ENCODE measurements at regions of chr10 and their contacts with region 1.

Region 1: GRCh38 chr10:97210543-97210961 is 24.8 kb upstream of the SLIT1 start:
- DNase-seq: peak; percentile 91
- ATAC-seq: peak; percentile 93
- H3K4me3 Mint-ChIP-seq: no peak overlapping the region
- H3K27ac Mint-ChIP-seq: no peak overlapping the region
- H3K4me1 Mint-ChIP-seq: no peaks in the 10 kb centered on the region
- H3K27me3 Mint-ChIP-seq: no peaks in the 10 kb centered on the region
- CTCF ChIP-seq: peak; percentile 98

Region 2: GRCh38 chr10:97042746-97043565 is 167.6 kb before region 1 on chr10:
- CTCF ChIA-PET with region 1: interaction called, 26 read pairs
- POLR2A ChIA-PET with region 1: no interaction called
- DNase-seq: no peak
- ATAC-seq: no peak
- H3K4me3 Mint-ChIP-seq: no peak overlapping the region
- H3K27ac Mint-ChIP-seq: no peak overlapping the region; the same call in 1 of the 2 replicates
- H3K4me1 Mint-ChIP-seq: peaks cover 12% of the 10 kb centered on the region
- H3K27me3 Mint-ChIP-seq: peaks cover 1% of the 10 kb centered on the region
- CTCF ChIP-seq: no peak

Region 3: GRCh38 chr10:97170326-97170725 is 40.2 kb before region 1 on chr10:
- CTCF ChIA-PET with region 1: interaction called, 10 read pairs
- POLR2A ChIA-PET with region 1: no interaction called
- DNase-seq: no peak
- ATAC-seq: peak; percentile 58
- H3K4me3 Mint-ChIP-seq: no peak overlapping the region
- H3K27ac Mint-ChIP-seq: no peak overlapping the region
- H3K4me1 Mint-ChIP-seq: peaks cover 10% of the 10 kb centered on the region; the same call in 1 of the 2 replicates
- H3K27me3 Mint-ChIP-seq: no peaks in the 10 kb centered on the region
- CTCF ChIP-seq: no peak

Region 4: DNA sequence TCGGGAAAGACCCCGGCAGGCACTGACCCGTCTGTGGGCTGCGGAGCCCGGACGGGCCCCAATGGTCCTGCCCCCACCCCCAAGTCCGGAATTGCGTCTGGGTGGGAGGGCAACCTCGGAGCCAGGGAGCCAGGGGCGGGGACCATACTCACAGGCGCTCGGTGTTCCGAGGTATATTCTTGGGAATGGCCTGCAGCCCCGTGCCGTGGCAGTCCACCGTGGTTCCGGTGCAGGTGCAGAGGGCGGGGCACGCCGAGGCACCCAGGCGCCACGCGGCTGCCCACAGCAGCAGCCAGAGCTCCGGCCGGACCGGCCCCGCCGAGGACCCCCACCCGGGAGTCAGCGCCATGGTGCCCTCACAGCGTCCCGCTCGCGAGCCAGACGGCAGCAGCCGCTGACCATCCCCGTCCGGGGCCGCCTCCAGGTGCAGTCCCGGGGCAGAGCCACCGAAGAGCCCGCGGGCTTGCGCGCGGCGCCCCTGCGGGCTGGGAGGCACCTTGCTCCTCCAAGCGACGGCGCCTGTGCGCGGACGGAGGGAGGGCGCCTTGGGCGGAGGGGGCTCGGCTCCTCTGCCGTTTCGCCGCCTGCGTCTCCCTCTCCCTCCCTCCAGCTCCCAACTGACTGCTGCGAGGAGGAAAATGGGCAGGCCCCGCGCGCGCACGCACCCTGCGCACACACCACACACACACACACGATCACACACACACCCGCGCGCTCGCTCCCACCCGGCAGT is 25.1 kb before region 1 on chr10 and contains the start of gene SLIT1:
- CTCF ChIA-PET with region 1: interaction called, 123 read pairs
- POLR2A ChIA-PET with region 1: no interaction called
- DNase-seq: peak; percentile 61
- ATAC-seq: peak; percentile 71
- H3K4me3 Mint-ChIP-seq: peak within 1 kb of the TSS; percentile 81
- H3K27ac Mint-ChIP-seq: no peak within 1 kb of the TSS
- H3K4me1 Mint-ChIP-seq: peaks cover 20% of the 10 kb centered on the region
- H3K27me3 Mint-ChIP-seq: peaks cover 67% of the 10 kb centered on the region
- CTCF ChIP-seq: no peak
- total RNA-seq, gene SLIT1: 1.1 to 1.6 TPM (median 1.4 TPM) in 3 replicates

Region 5: GRCh38 chr10:97222326-97222961 is 11.9 kb after region 1 on chr10:
- CTCF ChIA-PET with region 1: interaction called, 32 read pairs
- POLR2A ChIA-PET with region 1: no interaction called
- DNase-seq: peak; percentile 54
- ATAC-seq: peak; percentile 99
- H3K4me3 Mint-ChIP-seq: no peak overlapping the region
- H3K27ac Mint-ChIP-seq: no peak overlapping the region
- H3K4me1 Mint-ChIP-seq: peaks cover 9% of the 10 kb centered on the region
- H3K27me3 Mint-ChIP-seq: no peaks in the 10 kb centered on the region
- CTCF ChIP-seq: no peak

Measured in WTC11 (cell line).